ENCODE measurements at regions of chr11 and their contacts with region 1.

Region 1: GRCh38 chr11:727859-728748 is 19.2 kb upstream of the TALDO1 start:
- DNase-seq: peak; percentile 91 to 94
- H3K4me3 ChIP-seq: peak overlapping the region; percentile 58; the same call in 1 of the 2 replicates
- H3K27ac ChIP-seq: peak overlapping the region; percentile 91
- H3K4me1 ChIP-seq: peaks cover 31% of the 10 kb centered on the region
- H3K27me3 ChIP-seq: no peaks in the 10 kb centered on the region
- CTCF ChIP-seq: peak; percentile 88

Region 2: GRCh38 chr11:568306-569157 is 159.6 kb before region 1 on chr11:
- CTCF ChIA-PET with region 1: no interaction called
- POLR2A ChIA-PET with region 1: no interaction called
- intact Hi-C with region 1: loop called (anchors 10 kb)
- DNase-seq: peak; percentile 67 to 95
- H3K4me3 ChIP-seq: peak overlapping the region; percentile 57; the same call in 1 of the 2 replicates
- H3K27ac ChIP-seq: no peak overlapping the region
- H3K4me1 ChIP-seq: 0 out of 2 replicates have a peak, but pooled peaks cover 6% of the 10 kb centered on the region
- H3K27me3 ChIP-seq: no peaks in the 10 kb centered on the region
- CTCF ChIP-seq: no peak

Region 3: DNA sequence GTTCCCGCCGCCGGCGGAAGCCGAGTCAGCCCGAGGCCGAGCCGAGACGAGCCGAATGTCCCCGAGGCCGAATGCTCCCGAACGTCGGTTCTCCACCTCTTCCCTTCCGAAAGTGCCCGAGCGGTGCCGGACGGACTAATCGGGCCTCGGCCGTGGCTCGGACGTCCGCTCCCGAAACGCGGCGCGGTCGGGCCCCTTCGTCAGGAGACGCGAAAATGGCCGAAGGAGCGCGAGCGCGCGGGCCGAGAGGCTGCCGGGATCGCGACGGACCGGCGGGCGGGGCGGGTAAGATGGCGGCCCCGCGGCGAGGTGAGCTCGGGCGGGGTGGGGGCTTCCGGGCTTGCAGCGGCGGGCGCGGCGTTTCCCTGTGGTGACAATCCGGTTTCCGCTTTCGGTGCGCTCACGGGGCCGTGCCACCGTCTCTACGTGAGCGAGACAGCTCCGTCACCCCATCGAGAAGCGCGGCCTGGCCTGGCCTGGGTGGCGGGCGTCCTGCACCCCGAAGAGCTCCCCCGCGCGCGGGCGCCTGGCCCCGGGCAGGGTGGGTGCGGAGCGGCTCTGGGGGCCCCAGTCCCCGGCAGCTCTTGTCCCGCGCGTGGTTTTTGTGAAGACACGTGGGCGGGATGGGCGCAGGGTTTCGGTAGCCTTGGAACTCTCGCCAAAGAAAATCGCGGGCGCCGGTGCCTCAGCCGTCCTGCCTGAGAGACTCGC is 32.4 kb before region 1 on chr11 and contains the start of gene TMEM80:
- CTCF ChIA-PET with region 1: interaction called, 18 read pairs
- POLR2A ChIA-PET with region 1: interaction called, 7 read pairs
- intact Hi-C with region 1: loop called (anchors 2 kb)
- DNase-seq: peak; percentile 83 to 95
- H3K4me3 ChIP-seq: peak within 1 kb of the TSS; percentile 79
- H3K27ac ChIP-seq: peak within 1 kb of the TSS; percentile 99
- H3K4me1 ChIP-seq: peaks cover 27% of the 10 kb centered on the region; the same call in 1 of the 2 replicates
- H3K27me3 ChIP-seq: no peaks in the 10 kb centered on the region
- CTCF ChIP-seq: no peak
- total RNA-seq, gene TMEM80: 34.0 and 36.6 TPM in 2 replicates

Region 4: GRCh38 chr11:706957-707816 is 20.9 kb before region 1 on chr11:
- CTCF ChIA-PET with region 1: no interaction called
- POLR2A ChIA-PET with region 1: interaction called, 8 read pairs
- intact Hi-C with region 1: loop called (anchors 1 kb)
- DNase-seq: peak; percentile 81
- H3K4me3 ChIP-seq: peak overlapping the region; percentile 84
- H3K27ac ChIP-seq: peak overlapping the region; percentile 81
- H3K4me1 ChIP-seq: peaks cover 17% of the 10 kb centered on the region
- H3K27me3 ChIP-seq: no peaks in the 10 kb centered on the region
- CTCF ChIP-seq: no peak

Region 5: GRCh38 chr11:747158-748006 is 19.3 kb after region 1 on chr11 and contains the start of gene TALDO1:
- CTCF ChIA-PET with region 1: interaction called, 7 read pairs
- POLR2A ChIA-PET with region 1: interaction called, 3 read pairs
- intact Hi-C with region 1: loop called (anchors 1 kb)
- DNase-seq: peak; percentile 65 to 89
- H3K4me3 ChIP-seq: peak within 1 kb of the TSS; percentile 87
- H3K27ac ChIP-seq: peak within 1 kb of the TSS; percentile 96
- H3K4me1 ChIP-seq: peaks cover 11% of the 10 kb centered on the region
- H3K27me3 ChIP-seq: no peaks in the 10 kb centered on the region
- CTCF ChIP-seq: no peak
- total RNA-seq, gene TALDO1: 434 and 446 TPM in 2 replicates

Region 6: GRCh38 chr11:762421-763072 is 34.4 kb after region 1 on chr11:
- CTCF ChIA-PET with region 1: interaction called, 7 read pairs
- POLR2A ChIA-PET with region 1: interaction called, 7 read pairs
- intact Hi-C with region 1: loop called (anchors 1 kb)
- DNase-seq: peak; percentile 83 to 93
- H3K4me3 ChIP-seq: peak overlapping the region; percentile 28; the same call in 1 of the 2 replicates
- H3K27ac ChIP-seq: peak overlapping the region; percentile 90
- H3K4me1 ChIP-seq: peaks cover 30% of the 10 kb centered on the region
- H3K27me3 ChIP-seq: no peaks in the 10 kb centered on the region
- CTCF ChIP-seq: peak; percentile 50; the same call in 1 of the 2 replicates